ENCODE measurements at regions of chr19 and their contacts with region 1.

Region 1: DNA sequence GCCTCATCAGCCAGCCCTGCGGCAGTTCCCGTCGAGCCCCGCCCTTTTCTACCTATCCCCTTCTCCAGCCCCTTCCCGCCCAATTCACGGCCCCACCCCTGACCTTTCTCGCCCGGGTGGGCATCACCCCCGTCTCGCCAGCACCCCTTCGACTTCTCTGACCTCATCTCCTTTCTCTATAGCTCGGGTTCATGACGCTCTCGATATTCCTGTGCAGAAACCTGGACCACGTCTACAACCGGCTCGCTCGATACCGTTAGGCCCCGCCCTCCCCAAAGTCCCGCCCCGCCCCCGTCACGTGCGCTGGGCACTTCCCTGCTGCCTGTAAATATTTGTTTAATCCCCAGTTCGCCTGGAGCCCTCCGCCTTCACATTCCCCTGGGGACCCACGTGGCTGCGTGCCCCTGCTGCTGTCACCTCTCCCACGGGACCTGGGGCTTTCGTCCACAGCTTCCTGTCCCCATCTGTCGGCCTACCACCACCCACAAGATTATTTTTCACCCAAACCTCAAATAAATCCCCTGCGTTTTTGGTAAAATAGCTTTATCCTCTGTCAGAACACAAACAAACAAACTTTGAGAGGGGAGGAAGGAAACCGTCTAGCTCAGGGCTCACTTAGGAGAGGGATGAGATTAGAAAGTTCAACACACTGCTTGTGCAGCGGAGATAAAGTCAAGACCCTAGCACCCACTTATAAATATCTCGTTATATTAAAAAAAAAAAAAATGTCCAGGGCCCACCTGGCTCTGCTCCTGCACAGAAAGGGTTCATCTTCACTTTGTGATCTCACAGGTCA is 5.1 kb downstream of the CD37 start:
- DNase-seq: peak; percentile 93
- ATAC-seq: peak; percentile 72
- H3K4me3 Mint-ChIP-seq: peak overlapping the region; percentile 80
- H3K27ac Mint-ChIP-seq: peak overlapping the region; percentile 93
- H3K4me1 Mint-ChIP-seq: peaks cover 83% of the 10 kb centered on the region
- H3K27me3 Mint-ChIP-seq: no peaks in the 10 kb centered on the region
- CTCF ChIP-seq: no peak

Region 2: DNA sequence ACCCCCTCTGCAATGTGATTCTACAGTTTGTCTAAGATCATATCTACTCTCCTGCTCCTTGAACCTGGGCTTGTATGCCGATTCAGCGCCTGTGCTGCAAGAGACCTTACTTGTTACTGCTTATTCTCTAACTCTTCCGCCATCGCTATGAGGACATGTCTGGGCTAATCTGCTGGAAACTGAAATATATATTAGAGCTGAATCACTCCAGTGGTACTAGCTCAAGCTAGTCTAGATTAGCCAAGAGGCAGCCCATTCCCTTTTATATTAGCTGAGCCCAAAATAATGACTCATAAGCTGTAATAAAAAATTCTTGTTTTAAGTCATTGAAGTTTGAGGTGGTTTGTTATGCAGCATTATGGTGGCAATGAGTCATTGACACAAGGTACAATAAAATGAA is 68.1 kb before region 1 on chr19:
- CTCF ChIA-PET with region 1: interaction called, 3 read pairs
- POLR2A ChIA-PET with region 1: interaction called, 22 read pairs
- intact Hi-C with region 1: loop called (anchors 2 kb)
- DNase-seq: no peak
- ATAC-seq: no peak
- H3K4me3 Mint-ChIP-seq: no peak overlapping the region
- H3K27ac Mint-ChIP-seq: no peak overlapping the region
- H3K4me1 Mint-ChIP-seq: no peaks in the 10 kb centered on the region
- H3K27me3 Mint-ChIP-seq: peaks cover 11% of the 10 kb centered on the region
- CTCF ChIP-seq: no peak

Region 3: DNA sequence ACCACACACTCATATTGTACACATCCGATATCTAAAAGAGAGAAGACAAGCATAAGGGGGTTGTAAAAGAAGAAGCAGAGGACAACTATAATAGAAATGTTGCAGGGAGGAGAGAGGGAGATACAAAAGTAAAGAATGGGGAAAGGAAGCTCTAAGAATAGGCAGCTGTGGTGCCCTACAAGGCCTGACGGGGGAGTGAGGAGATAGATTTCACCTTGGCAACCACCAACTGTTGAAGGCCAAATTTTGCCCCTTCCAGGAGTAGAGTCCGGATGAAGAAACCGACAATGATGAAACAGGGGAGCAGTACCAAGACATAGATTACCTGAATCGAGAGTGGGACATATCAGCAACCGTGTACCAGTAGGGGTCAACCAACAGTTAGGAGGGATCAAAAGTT is 31.2 kb before region 1 on chr19:
- CTCF ChIA-PET with region 1: interaction called, 6 read pairs
- POLR2A ChIA-PET with region 1: interaction called, 64 read pairs
- intact Hi-C with region 1: no loop called
- DNase-seq: no peak
- ATAC-seq: peak; percentile 37
- H3K4me3 Mint-ChIP-seq: no peak overlapping the region
- H3K27ac Mint-ChIP-seq: peak overlapping the region; percentile 74
- H3K4me1 Mint-ChIP-seq: peaks cover 47% of the 10 kb centered on the region
- H3K27me3 Mint-ChIP-seq: no peaks in the 10 kb centered on the region
- CTCF ChIP-seq: no peak

Region 4: GRCh38 chr19:49315111-49315510 is 25.2 kb before region 1 on chr19:
- CTCF ChIA-PET with region 1: interaction called, 4 read pairs
- POLR2A ChIA-PET with region 1: interaction called, 757 read pairs
- intact Hi-C with region 1: no loop called
- DNase-seq: no peak
- ATAC-seq: no peak
- H3K4me3 Mint-ChIP-seq: no peak overlapping the region
- H3K27ac Mint-ChIP-seq: peak overlapping the region; percentile 4
- H3K4me1 Mint-ChIP-seq: peaks cover 48% of the 10 kb centered on the region
- H3K27me3 Mint-ChIP-seq: no peaks in the 10 kb centered on the region
- CTCF ChIP-seq: no peak

Region 5: DNA sequence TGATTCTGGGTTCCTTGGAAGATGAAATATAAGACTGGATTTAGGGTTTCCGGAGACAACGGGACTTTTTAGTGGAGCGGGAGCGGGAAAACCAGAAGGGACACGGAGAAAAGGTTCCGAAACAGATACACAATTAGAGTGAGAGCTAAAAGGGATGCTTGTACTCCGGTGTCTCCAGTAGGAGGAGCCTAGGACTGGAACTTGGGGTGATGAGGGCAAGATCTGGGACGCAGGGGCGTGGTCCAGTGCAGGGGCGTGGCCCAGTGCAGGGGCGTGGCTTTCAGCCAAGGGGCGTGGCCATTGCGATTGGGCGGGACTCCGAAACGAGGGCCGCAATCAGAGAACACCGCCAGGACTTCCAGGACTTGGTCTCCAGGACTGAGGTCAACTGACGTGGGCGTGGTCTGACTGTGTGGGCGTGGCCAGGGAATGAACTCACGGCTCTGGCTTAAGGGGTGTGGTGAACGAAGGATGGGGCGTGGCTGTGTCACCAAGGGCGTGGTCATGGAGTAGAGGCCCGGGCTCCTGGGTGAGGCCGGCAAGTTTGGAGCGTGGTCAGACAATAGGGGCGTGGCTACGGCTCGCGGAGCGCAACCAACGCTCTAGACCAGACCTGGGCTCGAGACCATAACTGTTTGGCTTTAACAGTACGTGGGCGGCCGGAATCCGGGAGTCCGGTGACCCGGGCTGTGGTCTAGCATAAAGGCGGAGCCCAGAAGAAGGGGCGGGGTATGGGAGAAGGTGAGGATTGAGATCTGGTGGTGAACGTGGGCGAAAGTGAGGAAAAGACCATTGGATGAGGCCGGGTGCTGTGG is 23.2 kb after region 1 on chr19 and contains the start of gene DKKL1:
- CTCF ChIA-PET with region 1: no interaction called
- POLR2A ChIA-PET with region 1: interaction called, 89 read pairs
- intact Hi-C with region 1: loop called (anchors 1 kb)
- DNase-seq: peak; percentile 94
- ATAC-seq: peak; percentile 85
- H3K4me3 Mint-ChIP-seq: peak within 1 kb of the TSS; percentile 29
- H3K27ac Mint-ChIP-seq: no peak within 1 kb of the TSS
- H3K4me1 Mint-ChIP-seq: peaks cover 31% of the 10 kb centered on the region
- H3K27me3 Mint-ChIP-seq: no peaks in the 10 kb centered on the region
- CTCF ChIP-seq: no peak
- total RNA-seq, gene DKKL1: 0.71 and 0.76 TPM in 2 replicates

Region 6: GRCh38 chr19:49427855-49428546 is 87.7 kb after region 1 on chr19:
- CTCF ChIA-PET with region 1: no interaction called
- POLR2A ChIA-PET with region 1: interaction called, 12 read pairs
- intact Hi-C with region 1: no loop called
- DNase-seq: no peak
- ATAC-seq: peak; percentile 61
- H3K4me3 Mint-ChIP-seq: peak overlapping the region; percentile 70
- H3K27ac Mint-ChIP-seq: no peak overlapping the region
- H3K4me1 Mint-ChIP-seq: peaks cover 51% of the 10 kb centered on the region
- H3K27me3 Mint-ChIP-seq: peaks cover 73% of the 10 kb centered on the region
- CTCF ChIP-seq: no peak

Region 7: DNA sequence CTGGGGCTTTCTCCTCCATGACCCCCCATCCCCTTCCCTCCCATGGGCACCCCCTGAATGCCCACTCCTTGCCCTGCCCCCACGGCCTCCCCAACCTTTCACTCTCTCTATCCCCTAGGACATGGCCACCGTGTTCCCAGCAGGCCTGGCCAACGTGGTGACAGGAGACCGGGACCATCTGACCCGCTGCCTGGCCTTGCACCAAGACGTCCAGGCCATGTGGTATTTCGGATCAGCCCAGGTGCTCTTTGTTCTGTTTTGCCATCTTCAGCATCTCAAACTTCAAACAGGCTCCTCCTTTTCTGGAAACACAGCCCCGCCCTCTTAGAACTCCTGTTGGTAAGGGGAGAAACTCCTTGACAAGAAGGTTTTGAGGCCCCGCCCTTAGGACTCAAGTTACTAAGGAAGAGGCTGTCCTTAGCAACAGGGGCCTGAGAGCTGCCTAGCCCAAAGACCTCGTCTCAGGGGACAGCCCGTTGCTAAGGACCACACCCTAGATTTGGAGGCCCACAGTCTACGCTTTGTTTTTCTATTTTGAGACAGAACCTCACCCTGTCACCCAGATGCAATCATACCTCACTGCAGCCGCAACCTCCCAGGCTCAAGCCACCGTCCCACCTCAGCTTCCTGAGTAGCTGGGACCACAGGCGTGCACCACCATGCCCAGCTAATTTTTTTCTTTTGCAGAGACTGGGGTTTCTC is 128.6 kb after region 1 on chr19:
- CTCF ChIA-PET with region 1: no interaction called
- POLR2A ChIA-PET with region 1: interaction called, 45 read pairs
- intact Hi-C with region 1: loop called (anchors 2 kb)
- DNase-seq: peak; percentile 72
- ATAC-seq: peak; percentile 76
- H3K4me3 Mint-ChIP-seq: peak overlapping the region; percentile 61
- H3K27ac Mint-ChIP-seq: peak overlapping the region; percentile 97
- H3K4me1 Mint-ChIP-seq: peaks cover 46% of the 10 kb centered on the region
- H3K27me3 Mint-ChIP-seq: no peaks in the 10 kb centered on the region
- CTCF ChIP-seq: no peak

Region 8: DNA sequence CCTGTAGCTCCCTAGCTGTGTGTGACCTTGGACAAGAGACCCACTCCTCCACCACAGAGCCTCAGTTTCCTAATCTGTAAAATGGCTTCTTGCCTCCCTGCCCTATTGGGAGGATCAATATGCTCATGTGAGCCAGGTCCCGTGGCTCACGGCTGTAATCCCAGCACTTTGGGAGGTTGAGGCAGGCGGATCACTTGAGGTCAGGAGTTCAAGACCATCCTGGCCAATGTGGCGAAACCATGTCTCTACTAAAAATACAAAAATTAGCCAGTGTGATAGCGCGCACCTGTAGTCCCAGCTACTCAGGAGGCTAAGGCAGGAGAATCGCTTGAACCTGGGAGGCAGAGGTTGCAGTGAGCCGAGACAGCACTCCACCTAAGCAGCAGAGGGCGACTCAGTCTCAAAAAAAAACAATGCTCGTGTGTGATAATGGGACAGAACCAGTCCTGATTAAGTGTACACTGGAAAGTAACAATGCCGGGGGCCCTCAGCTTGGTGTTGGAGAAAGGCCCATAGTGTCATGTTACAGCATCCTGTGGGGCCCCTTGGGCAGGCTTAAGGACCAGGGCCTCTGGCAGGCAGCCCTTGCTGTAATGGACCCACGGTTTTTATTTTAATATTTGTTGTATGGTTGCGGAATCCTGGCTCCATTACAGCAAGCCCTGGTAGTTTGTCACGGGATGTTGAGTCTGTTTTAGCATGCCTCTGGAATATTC is 162.8 kb after region 1 on chr19:
- CTCF ChIA-PET with region 1: no interaction called
- POLR2A ChIA-PET with region 1: no interaction called
- intact Hi-C with region 1: no loop called
- DNase-seq: no peak
- ATAC-seq: no peak
- H3K4me3 Mint-ChIP-seq: no peak overlapping the region
- H3K27ac Mint-ChIP-seq: peak overlapping the region; percentile 83
- H3K4me1 Mint-ChIP-seq: peaks cover 53% of the 10 kb centered on the region
- H3K27me3 Mint-ChIP-seq: no peaks in the 10 kb centered on the region
- CTCF ChIP-seq: no peak